A549 (cell line): ENCODE measurements at regions of chr13 and their contacts with region 1.

Region 1: DNA sequence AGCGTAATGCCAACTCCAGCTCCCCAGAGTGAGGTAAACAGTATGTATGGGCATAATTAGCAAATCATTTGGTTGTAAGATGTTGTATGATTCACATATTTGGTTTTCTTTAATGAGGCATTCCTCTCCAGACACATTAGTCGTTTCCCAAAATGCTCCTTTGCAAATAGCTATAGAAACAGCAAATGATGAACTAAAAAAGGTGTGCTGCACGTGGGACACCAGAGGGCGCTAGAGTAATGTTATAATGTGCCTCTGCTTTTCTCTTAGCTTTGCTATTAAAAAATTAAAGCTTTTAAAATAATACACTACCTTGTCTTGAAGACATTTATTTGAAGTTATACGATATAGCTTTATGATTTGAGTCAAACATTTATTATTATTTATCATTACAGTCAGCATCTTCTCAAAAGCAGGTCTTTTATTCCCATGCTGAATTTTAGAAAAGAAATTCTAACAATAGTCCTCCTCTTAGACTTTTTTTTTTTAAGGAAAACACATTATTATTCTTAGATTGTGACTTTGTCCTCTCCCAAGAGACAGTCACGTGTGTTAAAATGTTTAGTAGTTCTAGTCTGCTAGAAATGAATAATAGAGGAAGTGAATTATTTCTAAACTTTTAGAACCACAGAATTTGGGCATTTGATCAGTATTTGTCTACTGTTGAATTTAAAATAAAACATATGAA is 121.6 kb upstream of the FRY start:
- DNase-seq: peak; percentile 4 to 47
- ATAC-seq: no peak
- H3K4me3 ChIP-seq: no peak overlapping the region
- H3K27ac ChIP-seq: no peak overlapping the region
- H3K4me1 ChIP-seq: no peaks in the 10 kb centered on the region
- CTCF ChIP-seq: peak; percentile 74
- EP300 ChIP-seq: no peak
- POLR2A ChIP-seq: no peak
- RAD21 ChIP-seq: peak; percentile 68 to 75

Region 2: GRCh38 chr13:31686670-31687425 is 223.2 kb before region 1 on chr13:
- CTCF ChIA-PET with region 1: no interaction called
- POLR2A ChIA-PET with region 1: no interaction called
- DNase-seq: no peak
- ATAC-seq: no peak
- H3K4me3 ChIP-seq: no peak overlapping the region
- H3K27ac ChIP-seq: no peak overlapping the region
- H3K4me1 ChIP-seq: no peaks in the 10 kb centered on the region
- CTCF ChIP-seq: no peak
- EP300 ChIP-seq: no peak
- POLR2A ChIP-seq: no peak
- RAD21 ChIP-seq: no peak

Region 3: GRCh38 chr13:31807090-31807541 is 102.9 kb before region 1 on chr13:
- CTCF ChIA-PET with region 1: no interaction called
- POLR2A ChIA-PET with region 1: no interaction called
- DNase-seq: no peak
- ATAC-seq: no peak
- H3K4me3 ChIP-seq: no peak overlapping the region
- H3K27ac ChIP-seq: no peak overlapping the region
- H3K4me1 ChIP-seq: no peaks in the 10 kb centered on the region
- CTCF ChIP-seq: no peak
- EP300 ChIP-seq: no peak
- POLR2A ChIP-seq: no peak
- RAD21 ChIP-seq: no peak

Region 4: DNA sequence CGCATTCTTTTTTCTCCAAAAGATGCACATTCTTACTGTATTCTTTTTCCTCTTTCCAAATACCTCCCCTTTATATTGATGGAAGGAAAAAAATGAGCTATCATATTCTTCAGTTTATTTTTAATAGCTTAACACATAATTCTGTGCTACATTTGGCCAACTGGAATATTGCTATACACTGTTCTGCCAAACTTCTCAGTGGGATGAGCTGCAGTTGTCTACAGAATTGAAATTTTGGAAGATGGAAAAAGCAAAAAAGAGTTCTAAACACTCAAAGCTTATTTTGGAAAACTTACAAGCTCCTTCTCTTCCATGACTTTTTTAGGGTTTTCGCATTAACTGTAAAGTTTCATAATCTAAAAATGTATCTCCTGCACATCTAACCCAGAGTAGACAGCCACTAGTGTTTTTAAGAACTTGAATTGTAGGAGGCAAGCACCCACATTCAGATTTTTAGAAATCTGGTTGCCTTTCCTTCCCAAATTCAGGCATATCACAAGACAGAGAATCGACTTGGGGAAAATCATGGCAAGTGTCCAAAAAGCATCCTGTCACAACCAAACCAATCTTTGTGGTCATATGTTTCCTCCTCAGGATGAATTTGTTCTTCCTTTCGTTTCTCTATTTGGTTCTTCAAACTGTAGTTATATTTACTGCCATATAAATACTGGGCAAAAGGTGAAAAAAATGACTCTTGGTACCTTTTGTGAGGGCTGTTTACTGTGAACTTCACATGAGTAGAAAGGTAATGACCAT is 10.1 kb after region 1 on chr13:
- CTCF ChIA-PET with region 1: interaction called, 33 read pairs
- POLR2A ChIA-PET with region 1: no interaction called
- DNase-seq: no peak
- ATAC-seq: no peak
- H3K4me3 ChIP-seq: no peak overlapping the region
- H3K27ac ChIP-seq: no peak overlapping the region
- H3K4me1 ChIP-seq: no peaks in the 10 kb centered on the region
- CTCF ChIP-seq: no peak
- EP300 ChIP-seq: no peak
- POLR2A ChIP-seq: no peak
- RAD21 ChIP-seq: no peak

Region 5: GRCh38 chr13:32056316-32056715 is 146.3 kb after region 1 on chr13:
- CTCF ChIA-PET with region 1: no interaction called
- POLR2A ChIA-PET with region 1: no interaction called
- DNase-seq: no peak
- ATAC-seq: no peak
- H3K4me3 ChIP-seq: no peak overlapping the region
- H3K27ac ChIP-seq: no peak overlapping the region
- H3K4me1 ChIP-seq: no peaks in the 10 kb centered on the region
- CTCF ChIP-seq: no peak
- EP300 ChIP-seq: no peak
- POLR2A ChIP-seq: no peak
- RAD21 ChIP-seq: no peak

Region 6: GRCh38 chr13:32310134-32310706 is 400.2 kb after region 1 on chr13:
- CTCF ChIA-PET with region 1: interaction called, 13 read pairs
- POLR2A ChIA-PET with region 1: no interaction called
- DNase-seq: peak; percentile 5 to 49
- ATAC-seq: peak; percentile 81 to 92
- H3K4me3 ChIP-seq: no peak overlapping the region
- H3K27ac ChIP-seq: no peak overlapping the region
- H3K4me1 ChIP-seq: peaks cover 3% of the 10 kb centered on the region; the same call in 1 of the 3 replicates
- CTCF ChIP-seq: peak; percentile 63
- EP300 ChIP-seq: no peak
- POLR2A ChIP-seq: no peak
- RAD21 ChIP-seq: peak; percentile 45 to 61; a peak in 4 of 5 replicates

Region 7: GRCh38 chr13:32581177-32581786 is 671.3 kb after region 1 on chr13:
- CTCF ChIA-PET with region 1: interaction called, 14 read pairs
- POLR2A ChIA-PET with region 1: no interaction called
- DNase-seq: no peak
- ATAC-seq: no peak
- H3K4me3 ChIP-seq: no peak overlapping the region
- H3K27ac ChIP-seq: no peak overlapping the region
- H3K4me1 ChIP-seq: no peaks in the 10 kb centered on the region
- CTCF ChIP-seq: peak; percentile 50
- EP300 ChIP-seq: no peak
- POLR2A ChIP-seq: no peak
- RAD21 ChIP-seq: peak; percentile 38 to 42; a peak in 4 of 5 replicates